Aorta (tissue), 5 donors: ENCODE measurements at regions of chr18 and their contacts with region 1.

Region 1: DNA sequence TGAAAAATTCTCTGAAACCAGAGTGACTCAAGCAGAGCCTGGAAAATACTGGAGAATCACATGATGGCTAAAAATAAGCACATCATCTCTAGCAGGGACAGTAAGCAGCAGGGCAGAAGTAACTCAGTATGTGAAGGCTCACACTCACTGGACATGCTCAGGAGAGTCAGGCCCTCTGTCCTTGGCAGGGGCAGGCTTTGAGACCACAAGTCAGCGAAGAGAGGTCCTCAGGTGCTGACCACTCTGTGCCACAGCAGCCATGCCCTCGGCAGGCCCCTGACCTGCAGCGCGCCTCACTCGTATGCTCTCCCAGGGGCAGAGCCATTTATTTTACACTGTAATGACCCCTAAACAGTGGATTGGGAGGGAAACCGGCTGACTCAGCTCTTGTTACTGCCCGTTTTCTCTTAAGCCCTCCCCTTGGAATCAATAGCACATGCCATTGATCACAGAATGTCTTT is 76.8 kb downstream of the MAPRE2 start:
- DNase-seq: no peak
- ATAC-seq: peak; percentile 88
- H3K4me3 ChIP-seq: no peak overlapping the region
- H3K27ac ChIP-seq: peak overlapping the region; percentile 37 to 60
- H3K4me1 ChIP-seq: peaks cover 0 to 8% of the 10 kb centered on the region in 2 donors
- H3K27me3 ChIP-seq: no peaks in the 10 kb centered on the region

Region 2: GRCh38 chr18:35040988-35041814 is 76.8 kb before region 1 on chr18 and contains the start of gene MAPRE2:
- intact Hi-C with region 1: loop called in 1 of 2 experiments (anchors 5 kb)
- DNase-seq: peak; percentile 100
- ATAC-seq: peak; percentile 99
- H3K4me3 ChIP-seq: peak within 1 kb of the TSS; percentile 65 to 82
- H3K27ac ChIP-seq: peak within 1 kb of the TSS in 1 of 2 donors; percentile 90
- H3K4me1 ChIP-seq: peaks cover 0 to 4% of the 10 kb centered on the region in 2 donors
- H3K27me3 ChIP-seq: no peaks in the 10 kb centered on the region
- total RNA-seq, gene MAPRE2: 52.7 to 71.9 TPM

Region 3: GRCh38 chr18:35060122-35060815 is 57.7 kb before region 1 on chr18:
- intact Hi-C with region 1: loop called in 1 of 2 experiments (anchors 10 kb)
- DNase-seq: no peak
- ATAC-seq: peak; percentile 19
- H3K4me3 ChIP-seq: no peak overlapping the region
- H3K27ac ChIP-seq: no peak overlapping the region
- H3K4me1 ChIP-seq: peaks cover 7 to 8% of the 10 kb centered on the region in 2 donors
- H3K27me3 ChIP-seq: no peaks in the 10 kb centered on the region

Region 4: GRCh38 chr18:35085450-35086380 is 32.3 kb before region 1 on chr18:
- intact Hi-C with region 1: loop called in 1 of 2 experiments (anchors 5 kb)
- DNase-seq: no peak
- ATAC-seq: no peak
- H3K4me3 ChIP-seq: no peak overlapping the region
- H3K27ac ChIP-seq: no peak overlapping the region
- H3K4me1 ChIP-seq: peaks cover 5 to 17% of the 10 kb centered on the region in 2 donors
- H3K27me3 ChIP-seq: no peaks in the 10 kb centered on the region

Region 5: DNA sequence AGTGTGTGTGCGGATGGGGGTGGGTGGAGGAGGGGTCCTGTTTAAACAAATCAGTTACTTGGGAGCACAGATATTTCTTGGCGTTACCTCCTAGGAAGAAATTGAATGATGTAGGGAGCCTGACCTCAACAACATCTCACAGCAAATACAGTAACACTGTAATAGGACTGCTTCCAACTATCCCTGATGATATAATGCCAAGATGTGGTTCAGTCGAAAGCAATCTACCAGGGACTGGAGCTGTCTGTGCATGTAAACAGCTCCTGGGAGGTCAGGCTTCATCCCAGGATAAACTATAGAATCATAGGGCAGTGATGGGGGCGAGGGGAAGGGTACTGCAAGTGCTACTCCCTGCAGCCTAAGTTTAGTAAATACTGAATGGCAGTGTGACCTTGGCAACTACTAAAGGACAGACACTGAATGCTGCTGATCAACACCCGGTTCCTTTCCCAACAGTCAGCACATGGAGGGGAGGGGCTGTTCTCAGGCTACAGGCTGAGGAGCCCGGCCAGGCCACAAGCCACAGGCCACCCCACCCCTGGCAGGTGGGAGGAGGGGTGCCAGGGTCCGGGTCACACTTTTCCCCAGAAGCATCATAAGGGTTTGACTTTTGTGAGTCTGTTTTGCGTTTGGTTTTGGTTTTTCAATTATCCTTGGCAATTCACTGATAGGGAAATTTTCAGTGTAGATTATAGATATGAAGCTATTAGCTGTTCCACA is 37.6 kb after region 1 on chr18:
- intact Hi-C with region 1: no loop called
- DNase-seq: no peak
- ATAC-seq: no peak
- H3K4me3 ChIP-seq: no peak overlapping the region
- H3K27ac ChIP-seq: no peak overlapping the region
- H3K4me1 ChIP-seq: no peaks in the 10 kb centered on the region
- H3K27me3 ChIP-seq: no peaks in the 10 kb centered on the region